Endothelial cell of umbilical vein (primary cell): ENCODE measurements at regions of chr12 and their contacts with region 1.

Region 1: GRCh38 chr12:3034067-3034750 is 43.0 kb upstream of the TSPAN9 start:
- DNase-seq: peak; percentile 78
- H3K4me3 ChIP-seq: no peak overlapping the region
- H3K27ac ChIP-seq: no peak overlapping the region
- H3K4me1 ChIP-seq: peaks cover 21% of the 10 kb centered on the region
- H3K27me3 ChIP-seq: no peaks in the 10 kb centered on the region
- CTCF ChIP-seq: peak; percentile 76 to 90
- POLR2A ChIP-seq: no peak

Region 2: DNA sequence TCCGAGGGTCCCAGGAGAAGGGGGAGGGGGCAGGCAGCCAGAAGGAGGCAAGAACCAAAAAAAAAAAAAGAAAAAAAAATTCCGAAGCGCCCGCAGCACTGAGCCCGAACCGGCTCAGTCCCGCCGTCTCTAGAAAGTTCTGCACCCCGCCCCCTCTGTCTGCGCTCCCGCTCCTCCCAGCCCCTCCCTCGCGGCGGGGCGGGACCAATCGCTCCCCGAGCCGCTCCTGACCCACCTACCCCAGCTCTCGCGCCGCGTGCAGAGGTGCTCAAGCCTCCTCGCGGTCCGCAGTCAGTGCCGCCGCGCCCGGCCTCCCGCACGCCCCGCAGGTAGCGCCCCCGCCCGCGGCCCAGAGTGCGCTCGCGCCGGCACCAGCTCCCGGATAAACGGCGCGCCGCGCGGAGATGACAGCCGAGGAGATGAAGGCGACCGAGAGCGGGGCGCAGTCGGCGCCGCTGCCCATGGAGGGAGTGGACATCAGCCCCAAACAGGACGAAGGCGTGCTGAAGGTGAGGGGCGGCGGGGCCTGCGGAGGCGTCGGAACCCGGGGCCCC is 239.4 kb before region 1 on chr12 and contains the start of gene FKBP4:
- CTCF ChIA-PET with region 1: interaction called, 3 read pairs
- POLR2A ChIA-PET with region 1: no interaction called
- dilution Hi-C with region 1: no loop called
- intact Hi-C with region 1: loop called (anchors 2 kb)
- DNase-seq: peak; percentile 82
- H3K4me3 ChIP-seq: peak within 1 kb of the TSS; percentile 69 to 93 (median 73)
- H3K27ac ChIP-seq: peak within 1 kb of the TSS; percentile 1
- H3K4me1 ChIP-seq: peaks cover 23% of the 10 kb centered on the region
- H3K27me3 ChIP-seq: peaks cover 5 to 7% of the 10 kb centered on the region in 2 experiments
- CTCF ChIP-seq: no peak
- POLR2A ChIP-seq: peak; percentile 76
- total RNA-seq, gene FKBP4: 74.1 and 85.6 TPM in 2 replicates

Region 3: GRCh38 chr12:2853626-2854025 is 180.6 kb before region 1 on chr12:
- CTCF ChIA-PET with region 1: interaction called, 38 read pairs
- POLR2A ChIA-PET with region 1: no interaction called
- dilution Hi-C with region 1: no loop called
- intact Hi-C with region 1: loop called (anchors 1 kb)
- DNase-seq: peak; percentile 69
- H3K4me3 ChIP-seq: no peak overlapping the region
- H3K27ac ChIP-seq: no peak overlapping the region
- H3K4me1 ChIP-seq: peaks cover 4% of the 10 kb centered on the region
- H3K27me3 ChIP-seq: no peaks in the 10 kb centered on the region
- CTCF ChIP-seq: peak; percentile 92 to 96
- POLR2A ChIP-seq: no peak

Region 4: GRCh38 chr12:2884810-2885209 is 149.4 kb before region 1 on chr12:
- CTCF ChIA-PET with region 1: interaction called, 91 read pairs
- POLR2A ChIA-PET with region 1: no interaction called
- dilution Hi-C with region 1: no loop called
- intact Hi-C with region 1: loop called (anchors 1 kb)
- DNase-seq: no peak
- H3K4me3 ChIP-seq: no peak overlapping the region
- H3K27ac ChIP-seq: no peak overlapping the region
- H3K4me1 ChIP-seq: no peaks in the 10 kb centered on the region
- H3K27me3 ChIP-seq: no peaks in the 10 kb centered on the region
- CTCF ChIP-seq: no peak
- POLR2A ChIP-seq: no peak

Region 5: GRCh38 chr12:2959505-2960389 is 74.5 kb before region 1 on chr12:
- CTCF ChIA-PET with region 1: interaction called, 12 read pairs
- POLR2A ChIA-PET with region 1: no interaction called
- dilution Hi-C with region 1: no loop called
- intact Hi-C with region 1: loop called (anchors 1 kb)
- DNase-seq: peak; percentile 72
- H3K4me3 ChIP-seq: peak overlapping the region; percentile 55 to 75 (median 65)
- H3K27ac ChIP-seq: peak overlapping the region; percentile 69
- H3K4me1 ChIP-seq: peaks cover 45% of the 10 kb centered on the region
- H3K27me3 ChIP-seq: no peaks in the 10 kb centered on the region
- CTCF ChIP-seq: no peak
- POLR2A ChIP-seq: no peak

Region 6: DNA sequence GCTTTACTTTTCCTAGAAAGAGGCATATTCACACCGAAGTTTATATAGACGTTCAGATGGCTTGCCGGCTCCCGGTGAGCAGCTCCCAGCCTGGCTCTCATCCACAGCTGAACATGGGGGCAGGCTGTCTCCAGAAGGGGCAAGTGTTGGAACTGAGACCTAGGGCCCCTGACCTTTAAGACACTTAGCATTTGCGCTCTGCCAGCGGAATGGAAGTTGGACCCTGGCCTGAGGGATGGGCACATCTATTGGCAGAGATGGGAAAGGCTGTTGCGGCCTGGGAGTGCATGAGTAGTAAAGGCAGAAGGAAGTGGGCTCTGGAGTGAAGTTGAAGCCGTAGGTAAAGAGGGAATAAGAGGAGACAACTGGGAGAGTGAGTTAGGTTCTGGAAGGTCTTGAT is 11.2 kb before region 1 on chr12:
- CTCF ChIA-PET with region 1: interaction called, 12 read pairs
- POLR2A ChIA-PET with region 1: interaction called, 3 read pairs
- dilution Hi-C with region 1: no loop called
- intact Hi-C with region 1: no loop called
- DNase-seq: no peak
- H3K4me3 ChIP-seq: no peak overlapping the region
- H3K27ac ChIP-seq: no peak overlapping the region
- H3K4me1 ChIP-seq: no peaks in the 10 kb centered on the region
- H3K27me3 ChIP-seq: no peaks in the 10 kb centered on the region
- CTCF ChIP-seq: no peak
- POLR2A ChIP-seq: no peak